Caco-2 (cell line): ENCODE measurements at regions of chr12 and their contacts with region 1.

Region 1: GRCh38 chr12:118035246-118036041 is 18.9 kb downstream of the RFC5 start:
- DNase-seq: no peak
- H3K4me3 ChIP-seq: no peak overlapping the region
- H3K4me3 Mint-ChIP-seq: no peak overlapping the region
- H3K27ac Mint-ChIP-seq: peak overlapping the region; percentile 48
- H3K4me1 ChIP-seq: peaks cover 3% of the 10 kb centered on the region; the same call in 1 of the 2 replicates
- H3K4me1 Mint-ChIP-seq: peaks cover 7% of the 10 kb centered on the region
- H3K27me3 ChIP-seq: no peaks in the 10 kb centered on the region
- H3K27me3 Mint-ChIP-seq: no peaks in the 10 kb centered on the region
- CTCF ChIP-seq: no peak

Region 2: DNA sequence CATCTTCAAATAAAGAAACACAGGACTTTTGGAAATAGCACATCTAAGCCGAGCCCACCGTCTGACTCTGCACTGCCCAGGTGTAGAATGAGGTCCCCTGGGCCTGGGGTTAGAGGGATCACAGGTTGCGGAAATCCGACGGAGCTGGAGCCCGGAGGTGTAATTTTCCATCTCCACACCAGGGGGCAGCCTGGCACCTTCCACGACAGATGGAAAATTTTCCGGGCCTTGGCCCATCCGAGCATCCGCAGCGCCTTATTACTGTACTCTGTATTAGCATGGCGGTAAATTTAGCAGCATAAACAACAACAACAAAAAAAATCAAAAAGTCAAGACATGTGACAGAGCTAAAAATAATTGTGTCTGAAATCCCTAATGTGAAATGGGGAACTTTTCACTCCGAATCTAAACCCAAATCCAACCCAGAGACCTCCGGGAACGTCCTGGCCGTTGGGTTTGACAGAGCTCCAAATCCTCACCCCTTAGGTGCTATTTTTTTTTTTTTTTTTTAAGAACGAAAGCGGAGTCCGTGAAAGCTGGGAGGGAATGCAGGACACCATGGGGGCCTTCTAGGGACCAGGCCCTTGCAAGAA is 160.5 kb before region 1 on chr12:
- CTCF ChIA-PET with region 1: interaction called, 23 read pairs
- POLR2A ChIA-PET with region 1: no interaction called
- intact Hi-C with region 1: loop called (anchors 1 kb)
- DNase-seq: peak; percentile 67 to 82
- H3K4me3 ChIP-seq: no peak overlapping the region
- H3K4me3 Mint-ChIP-seq: no peak overlapping the region
- H3K27ac Mint-ChIP-seq: no peak overlapping the region
- H3K4me1 ChIP-seq: no peaks in the 10 kb centered on the region
- H3K4me1 Mint-ChIP-seq: no peaks in the 10 kb centered on the region
- H3K27me3 ChIP-seq: no peaks in the 10 kb centered on the region
- H3K27me3 Mint-ChIP-seq: no peaks in the 10 kb centered on the region
- CTCF ChIP-seq: peak; percentile 82 to 96

Region 3: GRCh38 chr12:118052324-118053070 is 17.1 kb after region 1 on chr12:
- CTCF ChIA-PET with region 1: interaction called, 5 read pairs
- POLR2A ChIA-PET with region 1: no interaction called
- intact Hi-C with region 1: loop called (anchors 2 kb)
- DNase-seq: peak; percentile 83 to 92
- H3K4me3 ChIP-seq: no peak overlapping the region
- H3K4me3 Mint-ChIP-seq: peak overlapping the region; percentile 14
- H3K27ac Mint-ChIP-seq: peak overlapping the region; percentile 80
- H3K4me1 ChIP-seq: peaks cover 28% of the 10 kb centered on the region
- H3K4me1 Mint-ChIP-seq: peaks cover 20% of the 10 kb centered on the region
- H3K27me3 ChIP-seq: no peaks in the 10 kb centered on the region
- H3K27me3 Mint-ChIP-seq: no peaks in the 10 kb centered on the region
- CTCF ChIP-seq: no peak

Region 4: GRCh38 chr12:118259079-118259478 is 223.6 kb after region 1 on chr12:
- CTCF ChIA-PET with region 1: no interaction called
- POLR2A ChIA-PET with region 1: no interaction called
- intact Hi-C with region 1: no loop called
- DNase-seq: no peak
- H3K4me3 ChIP-seq: no peak overlapping the region
- H3K4me3 Mint-ChIP-seq: no peak overlapping the region
- H3K27ac Mint-ChIP-seq: no peak overlapping the region
- H3K4me1 ChIP-seq: no peaks in the 10 kb centered on the region
- H3K4me1 Mint-ChIP-seq: no peaks in the 10 kb centered on the region
- H3K27me3 ChIP-seq: no peaks in the 10 kb centered on the region
- H3K27me3 Mint-ChIP-seq: no peaks in the 10 kb centered on the region
- CTCF ChIP-seq: no peak